Dorsolateral prefrontal cortex (tissue), 120 donors: ENCODE measurements at regions of chr12 and their contacts with region 1.

Region 1: GRCh38 chr12:123232807-123233543 is at the starts of genes MPHOSPH9 and MTRFR:
- DNase-seq: peak; percentile 96 to 99 (median 99)
- H3K4me3 ChIP-seq: peak within 1 kb of the TSS; percentile 75 to 100 (median 96)
- H3K27ac ChIP-seq: peak within 1 kb of the TSS; percentile 63 to 99 (median 94)
- H3K27me3 ChIP-seq: no peaks in the 10 kb centered on the region
- CTCF ChIP-seq: peak in 16 of 56 donors; percentile 5 to 44 (median 16)
- total RNA-seq, gene MPHOSPH9: 36.7 to 91.4 (median 60.7) TPM
- total RNA-seq, gene MTRFR: 13.4 to 27.6 (median 20.0) TPM

Region 2: GRCh38 chr12:122517877-122518276 is 715.1 kb before region 1 on chr12:
- intact Hi-C with region 1: no loop called
- DNase-seq: no peak
- H3K4me3 ChIP-seq: no peak overlapping the region
- H3K27ac ChIP-seq: no peak overlapping the region
- H3K27me3 ChIP-seq: no peaks in the 10 kb centered on the region
- CTCF ChIP-seq: no peak

Region 3: GRCh38 chr12:122860346-122861090 is 372.5 kb before region 1 on chr12:
- intact Hi-C with region 1: loop called in 1 of 2 experiments (anchors 10 kb)
- DNase-seq: peak; percentile 85 to 91 (median 86)
- H3K4me3 ChIP-seq: no peak overlapping the region
- H3K27ac ChIP-seq: peak overlapping the region; percentile 30 to 99 (median 86)
- H3K27me3 ChIP-seq: no peaks in the 10 kb centered on the region
- CTCF ChIP-seq: peak; percentile 77 to 97 (median 92)

Region 4: GRCh38 chr12:122974274-122974891 is 258.6 kb before region 1 on chr12:
- intact Hi-C with region 1: loop called in 1 of 2 experiments (anchors 5 kb)
- DNase-seq: peak; percentile 97 to 99 (median 98)
- H3K4me3 ChIP-seq: peak overlapping the region; percentile 71 to 100 (median 94)
- H3K27ac ChIP-seq: peak overlapping the region; percentile 94 to 100 (median 99)
- H3K27me3 ChIP-seq: no peaks in the 10 kb centered on the region
- CTCF ChIP-seq: peak in 5 of 56 donors; percentile 7 to 21 (median 15)

Region 5: GRCh38 chr12:122980183-122981046 is 252.6 kb before region 1 on chr12 and contains the start of gene ARL6IP4:
- intact Hi-C with region 1: loop called (anchors 5 kb)
- DNase-seq: peak in 5 of 10 donors; percentile 36 to 81 (median 64)
- H3K4me3 ChIP-seq: peak within 1 kb of the TSS; percentile 60 to 99 (median 94)
- H3K27ac ChIP-seq: peak within 1 kb of the TSS; percentile 12 to 96 (median 86)
- H3K27me3 ChIP-seq: no peaks in the 10 kb centered on the region
- CTCF ChIP-seq: peak in 19 of 56 donors; percentile 1 to 52 (median 16)
- total RNA-seq, gene ARL6IP4: 127 to 221 (median 162) TPM

Region 6: GRCh38 chr12:123271001-123271729 is 38.2 kb after region 1 on chr12:
- intact Hi-C with region 1: loop called (anchors 1 to 5 kb)
- DNase-seq: peak in 9 of 10 donors; percentile 56 to 83 (median 68)
- H3K4me3 ChIP-seq: peak overlapping the region; percentile 50 to 87 (median 73)
- H3K27ac ChIP-seq: peak overlapping the region in 56 of 59 donors; percentile 88 to 99 (median 98)
- H3K27me3 ChIP-seq: no peaks in the 10 kb centered on the region
- CTCF ChIP-seq: peak in 39 of 56 donors; percentile 5 to 74 (median 47)

Region 7: GRCh38 chr12:123559468-123559867 is 326.5 kb after region 1 on chr12:
- intact Hi-C with region 1: no loop called
- DNase-seq: no peak
- H3K4me3 ChIP-seq: no peak overlapping the region
- H3K27ac ChIP-seq: no peak overlapping the region
- H3K27me3 ChIP-seq: no peaks in the 10 kb centered on the region
- CTCF ChIP-seq: no peak